Thyroid gland (tissue), 4 donors: ENCODE measurements at regions of chr7 and their contacts with region 1.

Region 1: GRCh38 chr7:149005241-149006050 is 22.9 kb downstream of the PDIA4 start:
- DNase-seq: peak; percentile 73 to 80
- H3K4me3 ChIP-seq: no peak overlapping the region
- H3K27ac ChIP-seq: no peak overlapping the region
- H3K4me1 ChIP-seq: no peaks in the 10 kb centered on the region
- H3K27me3 ChIP-seq: no peaks in the 10 kb centered on the region
- CTCF ChIP-seq: peak; percentile 48 to 83 (median 63)
- POLR2A ChIP-seq: no peak

Region 2: GRCh38 chr7:148849393-148850098 is 155.9 kb before region 1 on chr7:
- intact Hi-C with region 1: no loop called
- DNase-seq: no peak
- H3K4me3 ChIP-seq: no peak overlapping the region
- H3K27ac ChIP-seq: no peak overlapping the region
- H3K4me1 ChIP-seq: no peaks in the 10 kb centered on the region
- H3K27me3 ChIP-seq: no peaks in the 10 kb centered on the region
- CTCF ChIP-seq: no peak
- POLR2A ChIP-seq: no peak

Region 3: GRCh38 chr7:148884299-148885022 is 121.0 kb before region 1 on chr7:
- intact Hi-C with region 1: no loop called
- DNase-seq: peak; percentile 90 to 91
- H3K4me3 ChIP-seq: peak overlapping the region; percentile 54 to 95 (median 75)
- H3K27ac ChIP-seq: peak overlapping the region; percentile 62 to 93 (median 88)
- H3K4me1 ChIP-seq: peaks cover 0 to 3% of the 10 kb centered on the region in 2 donors
- H3K27me3 ChIP-seq: no peaks in the 10 kb centered on the region
- CTCF ChIP-seq: no peak
- POLR2A ChIP-seq: peak in 1 of 2 donors; percentile 66

Region 4: DNA sequence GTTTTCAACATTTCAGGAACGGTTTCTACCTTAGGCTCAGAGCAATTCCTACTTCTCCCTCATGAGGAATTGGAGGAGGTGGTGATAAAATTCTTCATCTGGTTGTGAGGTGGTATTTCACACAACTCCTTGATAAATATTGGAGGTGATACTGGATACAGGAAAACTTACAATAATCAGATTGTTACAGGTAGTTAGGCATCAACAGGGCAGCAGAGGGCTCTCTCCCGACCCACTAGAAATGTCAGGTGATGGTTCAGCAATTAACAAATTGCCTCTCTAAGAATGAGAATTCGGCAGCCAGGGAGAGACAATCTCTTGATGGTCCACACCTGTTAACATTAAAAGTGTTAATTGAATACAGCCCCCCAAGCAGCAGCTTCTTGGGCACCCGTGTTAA is 62.4 kb after region 1 on chr7:
- intact Hi-C with region 1: loop called (anchors 5 kb)
- DNase-seq: no peak
- H3K4me3 ChIP-seq: no peak overlapping the region
- H3K27ac ChIP-seq: no peak overlapping the region
- H3K4me1 ChIP-seq: peaks cover 0 to 7% of the 10 kb centered on the region in 2 donors
- H3K27me3 ChIP-seq: no peaks in the 10 kb centered on the region
- CTCF ChIP-seq: no peak
- POLR2A ChIP-seq: no peak

Region 5: DNA sequence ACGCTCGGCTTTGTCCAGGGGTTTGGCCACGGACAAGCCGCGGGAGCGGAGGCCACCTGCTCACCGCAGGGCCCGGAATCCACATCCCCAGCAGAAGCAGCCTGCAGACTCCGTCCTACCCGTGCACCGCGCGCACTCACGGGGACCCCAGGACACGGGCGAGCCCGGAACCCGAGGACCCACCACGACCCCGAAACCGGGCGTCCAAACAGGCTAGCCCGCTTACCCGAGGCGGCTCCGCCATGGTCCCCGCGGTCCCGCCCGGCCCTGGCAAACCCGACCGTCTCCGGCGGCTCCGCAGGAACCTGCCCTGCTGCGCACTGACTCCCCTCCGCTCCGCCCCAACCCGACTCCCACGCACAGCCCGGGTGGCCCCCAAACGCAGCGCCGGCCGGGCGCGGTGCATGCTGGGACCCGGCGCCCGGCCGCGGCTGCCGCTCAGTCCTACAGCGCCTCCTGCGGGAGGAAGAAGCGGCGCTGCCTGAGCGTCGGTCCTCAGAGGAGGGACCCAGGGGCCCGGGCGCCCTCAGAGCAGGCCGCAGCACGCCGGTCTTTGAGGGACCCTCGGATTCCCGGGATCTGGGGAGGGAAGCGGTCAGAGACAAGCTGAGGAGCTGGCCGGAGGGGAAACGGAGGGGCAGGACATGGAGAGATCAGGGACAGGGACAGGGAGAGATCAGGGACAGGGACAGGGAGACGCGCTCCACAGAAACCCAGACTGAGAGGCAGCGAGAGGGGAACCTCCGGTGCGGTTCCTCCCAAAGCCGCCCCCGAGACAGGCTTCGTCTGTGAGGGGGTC is 85.2 kb after region 1 on chr7 and contains the start of gene ZNF786:
- intact Hi-C with region 1: loop called (anchors 2 kb)
- DNase-seq: peak; percentile 89 to 90
- H3K4me3 ChIP-seq: peak within 1 kb of the TSS; percentile 66 to 84 (median 78)
- H3K27ac ChIP-seq: peak within 1 kb of the TSS; percentile 92 to 95 (median 93)
- H3K4me1 ChIP-seq: peaks cover 0 to 7% of the 10 kb centered on the region in 2 donors
- H3K27me3 ChIP-seq: no peaks in the 10 kb centered on the region
- CTCF ChIP-seq: peak; percentile 69 to 98 (median 88)
- POLR2A ChIP-seq: peak in 1 of 2 donors; percentile 90
- total RNA-seq, gene ZNF786: 6.6 to 12.1 (median 10.7) TPM